A673 (cell line): ENCODE measurements at regions of chr6 and their contacts with region 1.

Region 1: GRCh38 chr6:3157131-3157927 is at the start of gene TUBB2A:
- DNase-seq: peak; percentile 89
- H3K4me3 ChIP-seq: peak within 1 kb of the TSS; percentile 76
- H3K27ac ChIP-seq: peak within 1 kb of the TSS; percentile 91
- H3K4me1 ChIP-seq: peaks cover 16% of the 10 kb centered on the region
- H3K27me3 ChIP-seq: no peaks in the 10 kb centered on the region
- CTCF ChIP-seq: peak; percentile 49
- total RNA-seq, gene TUBB2A: 93.9 and 112 TPM in 2 replicates

Region 2: GRCh38 chr6:2952557-2953095 is 204.7 kb before region 1 on chr6:
- CTCF ChIA-PET with region 1: no interaction called
- POLR2A ChIA-PET with region 1: no interaction called
- intact Hi-C with region 1: no loop called
- DNase-seq: peak; percentile 89
- H3K4me3 ChIP-seq: no peak overlapping the region
- H3K27ac ChIP-seq: no peak overlapping the region
- H3K4me1 ChIP-seq: peaks cover 5% of the 10 kb centered on the region
- H3K27me3 ChIP-seq: no peaks in the 10 kb centered on the region
- CTCF ChIP-seq: peak; percentile 100

Region 3: DNA sequence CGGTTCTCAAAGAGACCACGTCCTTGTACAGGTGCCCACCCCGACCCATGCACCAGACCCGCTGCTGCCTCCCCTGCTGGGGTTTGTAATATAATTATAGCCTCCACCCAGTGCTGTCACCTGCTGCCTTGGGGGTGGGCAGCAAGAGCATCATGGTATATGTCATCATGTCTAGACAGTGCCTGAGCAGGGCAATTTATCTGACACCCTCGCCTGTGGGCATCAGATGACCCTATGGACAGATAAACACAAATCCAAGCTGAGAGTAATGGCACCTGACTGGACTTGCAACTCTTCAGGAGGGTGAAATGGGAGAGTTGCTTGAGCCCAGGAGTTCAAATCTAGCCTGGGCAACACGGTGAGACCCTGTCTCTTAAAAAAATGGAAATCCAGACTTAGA is 23.0 kb after region 1 on chr6:
- CTCF ChIA-PET with region 1: no interaction called
- POLR2A ChIA-PET with region 1: no interaction called
- intact Hi-C with region 1: loop called (anchors 1 kb)
- DNase-seq: no peak
- H3K4me3 ChIP-seq: no peak overlapping the region
- H3K27ac ChIP-seq: no peak overlapping the region
- H3K4me1 ChIP-seq: no peaks in the 10 kb centered on the region
- H3K27me3 ChIP-seq: no peaks in the 10 kb centered on the region
- CTCF ChIP-seq: no peak

Region 4: DNA sequence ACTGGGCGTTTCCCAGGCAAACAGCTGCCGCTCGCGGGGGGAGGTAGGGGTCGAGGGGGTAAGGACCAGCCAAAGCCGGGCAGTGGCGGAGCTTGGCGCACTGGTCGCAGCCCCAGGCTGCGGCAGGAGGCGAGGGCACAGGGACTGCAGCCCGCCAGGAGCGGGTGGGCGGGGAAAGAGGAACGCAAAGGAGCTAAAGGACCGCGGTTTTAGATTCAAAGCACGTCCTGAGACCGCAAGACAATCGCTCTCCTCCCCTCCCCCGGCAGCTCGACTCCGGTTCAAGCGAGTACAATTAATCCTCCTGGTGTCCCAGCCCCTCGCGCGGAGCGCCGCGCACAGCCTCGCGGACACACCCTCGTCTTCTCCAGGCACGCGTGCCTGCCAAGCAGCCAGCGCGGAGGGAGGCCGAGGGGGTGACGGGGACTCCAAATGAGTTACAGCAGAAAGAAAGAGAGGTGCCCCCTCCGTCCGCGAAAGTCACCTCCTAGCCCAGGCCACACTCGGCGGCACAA is 69.6 kb after region 1 on chr6:
- CTCF ChIA-PET with region 1: no interaction called
- POLR2A ChIA-PET with region 1: interaction called, 3 read pairs
- intact Hi-C with region 1: loop called (anchors 2 kb)
- DNase-seq: peak; percentile 88
- H3K4me3 ChIP-seq: peak overlapping the region; percentile 85
- H3K27ac ChIP-seq: peak overlapping the region; percentile 83
- H3K4me1 ChIP-seq: peaks cover 23% of the 10 kb centered on the region
- H3K27me3 ChIP-seq: peaks cover 8% of the 10 kb centered on the region
- CTCF ChIP-seq: no peak

Region 5: GRCh38 chr6:3258720-3259490 is 101.6 kb after region 1 on chr6 and contains the start of gene PSMG4:
- CTCF ChIA-PET with region 1: no interaction called
- POLR2A ChIA-PET with region 1: no interaction called
- intact Hi-C with region 1: loop called (anchors 10 kb)
- DNase-seq: peak; percentile 92
- H3K4me3 ChIP-seq: peak within 1 kb of the TSS; percentile 84
- H3K27ac ChIP-seq: peak within 1 kb of the TSS; percentile 78
- H3K4me1 ChIP-seq: peaks cover 13% of the 10 kb centered on the region
- H3K27me3 ChIP-seq: no peaks in the 10 kb centered on the region
- CTCF ChIP-seq: no peak
- total RNA-seq, gene PSMG4: 34.4 and 40.8 TPM in 2 replicates